ENCODE measurements at regions of chr17 and their contacts with region 1.

Region 1: DNA sequence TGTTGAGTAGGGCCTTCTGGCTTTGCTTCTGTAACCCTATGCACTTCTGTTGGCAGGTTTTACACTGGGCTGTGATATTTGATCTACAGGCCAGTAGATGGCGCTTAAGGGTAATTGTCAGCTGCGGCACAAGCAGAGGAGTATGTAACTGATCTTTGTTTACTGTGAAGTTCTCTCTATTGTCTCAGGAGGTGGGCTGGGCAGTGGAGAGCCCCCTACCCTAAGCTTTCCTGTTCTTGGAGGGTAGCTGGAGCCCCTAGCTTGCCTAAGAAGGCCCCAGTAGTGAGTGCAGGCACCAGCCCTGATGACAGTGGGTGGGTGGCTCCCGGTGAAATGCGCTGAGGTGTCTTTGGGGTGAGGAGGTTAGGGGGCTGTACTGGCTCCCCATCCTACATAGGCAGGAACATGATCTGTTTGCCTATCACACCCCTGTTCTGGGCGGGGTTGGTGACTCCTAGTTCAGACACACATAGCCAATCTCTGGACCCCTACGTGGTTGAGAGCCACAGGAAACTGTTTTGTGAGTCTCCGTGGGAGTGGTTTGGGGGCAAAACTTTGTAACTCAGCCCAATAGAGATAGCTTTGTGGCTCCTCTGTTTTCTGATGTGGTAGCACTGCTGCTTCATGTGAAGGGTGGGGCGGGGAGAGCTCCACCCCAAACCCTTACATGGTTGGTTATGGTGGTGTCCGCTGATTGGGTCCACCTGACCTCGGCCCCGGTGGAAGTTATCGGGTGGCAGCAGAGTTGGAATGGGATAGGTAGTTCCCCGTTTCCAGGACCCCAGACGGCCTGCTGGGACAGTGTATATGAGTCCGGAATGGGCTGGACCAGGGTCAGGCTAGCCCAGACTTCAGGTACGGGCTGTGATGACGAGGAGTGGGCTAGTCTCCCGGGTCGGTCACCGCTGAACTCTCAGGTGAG is 60.4 kb downstream of the SLFN11 start:
- DNase-seq: peak; percentile 35 to 64 (median 48)
- ATAC-seq: peak; percentile 82
- H3K4me3 ChIP-seq: no peak overlapping the region
- H3K27ac ChIP-seq: peak overlapping the region in 1 of 4 donors; percentile 8
- H3K4me1 ChIP-seq: peaks cover 9% of the 10 kb centered on the region
- H3K27me3 ChIP-seq: peaks cover 0 to 3% of the 10 kb centered on the region in 2 donors
- CTCF ChIP-seq: peak; percentile 43 to 80 (median 72)
- POLR2A ChIP-seq: no peak

Region 2: GRCh38 chr17:35161281-35161761 is 151.7 kb before region 1 on chr17:
- intact Hi-C with region 1: loop called (anchors 10 kb)
- DNase-seq: no peak
- ATAC-seq: no peak
- H3K4me3 ChIP-seq: no peak overlapping the region
- H3K27ac ChIP-seq: no peak overlapping the region
- H3K4me1 ChIP-seq: no peaks in the 10 kb centered on the region
- H3K27me3 ChIP-seq: no peaks in the 10 kb centered on the region
- CTCF ChIP-seq: no peak
- POLR2A ChIP-seq: no peak

Region 3: DNA sequence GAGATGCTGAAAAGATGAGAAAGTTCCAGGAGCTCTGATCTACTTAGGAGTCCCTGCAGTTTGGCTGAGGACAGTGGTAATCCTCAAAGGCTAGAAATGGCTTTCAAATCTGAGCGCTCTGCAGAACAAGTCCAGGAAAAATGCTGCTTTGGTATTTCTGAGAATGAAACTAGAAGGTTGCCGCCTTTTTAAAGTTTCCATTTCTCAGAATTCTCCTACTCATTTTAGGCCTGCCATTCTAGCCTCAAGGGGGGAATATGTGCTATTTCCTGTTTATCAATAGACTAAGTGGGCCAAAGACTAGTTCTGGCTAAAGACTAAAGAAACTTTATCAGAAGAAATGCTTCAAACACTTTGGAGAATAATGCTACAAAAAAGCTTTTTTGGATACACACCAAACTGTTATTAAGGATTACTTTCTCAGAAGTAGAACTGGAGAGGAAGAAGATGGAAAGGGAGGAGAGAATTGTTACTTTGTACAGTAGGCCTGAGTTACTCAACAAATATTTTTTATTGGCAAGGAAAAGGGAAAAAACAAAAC is 224.6 kb after region 1 on chr17 and contains the start of gene SLFN12L:
- intact Hi-C with region 1: loop called (anchors 5 kb)
- DNase-seq: no peak
- ATAC-seq: no peak
- H3K4me3 ChIP-seq: no peak within 1 kb of the TSS
- H3K27ac ChIP-seq: no peak within 1 kb of the TSS
- H3K4me1 ChIP-seq: peaks cover 4% of the 10 kb centered on the region
- H3K27me3 ChIP-seq: no peaks in the 10 kb centered on the region
- CTCF ChIP-seq: no peak
- POLR2A ChIP-seq: no peak
- total RNA-seq, gene SLFN12L: 0.78 to 1.6 TPM

Region 4: DNA sequence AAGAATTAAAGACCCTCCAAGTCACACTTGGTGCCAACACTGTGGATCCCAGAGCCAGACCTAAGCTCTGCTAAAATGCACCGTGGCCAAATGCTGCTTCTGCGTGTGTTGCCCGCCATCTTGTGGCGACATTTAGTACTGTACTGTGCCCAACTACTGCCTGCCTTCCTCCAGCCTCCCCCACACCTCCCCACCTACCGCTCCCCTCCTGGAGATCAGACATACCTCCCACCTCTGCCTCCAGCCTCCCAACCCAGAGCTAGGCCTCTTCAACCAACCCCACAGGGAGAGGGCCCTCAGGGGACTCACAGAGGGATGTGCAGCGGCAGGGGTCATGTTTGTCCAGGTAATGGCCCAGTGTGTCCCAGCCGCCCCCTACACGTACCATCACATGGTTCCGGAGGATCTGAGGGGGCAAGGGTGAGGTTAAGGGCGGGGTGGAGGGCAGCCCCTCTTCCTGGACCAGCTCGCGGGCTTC is 434.5 kb after region 1 on chr17:
- intact Hi-C with region 1: loop called (anchors 10 kb)
- DNase-seq: peak; percentile 83 to 89 (median 84)
- ATAC-seq: peak; percentile 86
- H3K4me3 ChIP-seq: no peak overlapping the region
- H3K27ac ChIP-seq: no peak overlapping the region
- H3K4me1 ChIP-seq: peaks cover 10% of the 10 kb centered on the region
- H3K27me3 ChIP-seq: peaks cover 0 to 5% of the 10 kb centered on the region in 2 donors
- CTCF ChIP-seq: peak; percentile 83 to 98 (median 90)
- POLR2A ChIP-seq: no peak